ENCODE measurements at regions of chr11 and their contacts with region 1.

Region 1: DNA sequence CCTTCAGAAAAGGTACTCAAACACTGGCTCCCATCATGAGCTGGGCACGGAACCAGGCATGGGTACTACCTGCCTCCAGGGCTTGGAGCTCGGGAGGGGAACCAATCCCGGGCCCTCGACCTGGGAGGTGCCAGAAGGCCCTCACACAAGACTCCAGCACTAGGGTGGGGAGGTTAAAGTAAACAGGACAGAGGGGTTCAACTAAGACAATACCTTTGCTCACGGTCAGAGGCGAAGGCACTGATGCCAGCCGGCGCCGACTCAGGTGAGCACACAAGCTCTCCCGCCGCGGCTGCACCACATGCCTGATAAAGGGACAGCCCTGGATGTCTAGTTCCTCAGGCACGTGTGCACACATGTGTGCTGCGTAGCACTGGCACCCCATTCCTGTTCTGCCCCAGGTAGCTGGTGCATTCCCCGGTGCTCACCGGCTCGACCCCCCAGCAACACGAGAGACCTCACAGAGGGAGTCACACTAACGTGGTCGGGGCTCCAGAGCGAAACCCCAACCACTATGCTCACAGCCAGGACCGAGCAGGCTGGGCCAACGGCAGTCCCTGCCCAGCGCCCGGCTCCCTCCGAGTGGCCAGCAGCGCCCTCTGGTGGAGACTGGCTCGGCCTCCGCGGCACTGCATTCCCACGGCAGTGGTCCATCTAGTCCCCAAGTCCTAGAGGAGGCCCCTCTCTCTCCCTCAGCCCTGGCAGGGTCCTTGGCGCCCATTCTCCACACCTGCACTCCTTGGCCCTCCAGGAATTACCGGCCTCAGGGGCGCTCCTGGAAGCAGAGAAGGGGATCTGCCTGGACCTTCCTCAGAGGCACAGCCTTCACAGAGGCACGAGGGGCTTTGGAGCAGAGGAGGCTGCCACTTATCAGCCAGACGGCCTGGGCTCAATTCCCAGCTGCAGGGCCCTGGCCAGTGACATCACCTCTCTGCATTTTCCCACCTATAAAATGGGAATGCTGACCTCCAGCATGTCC is 28.8 kb upstream of the MOB2 start:
- DNase-seq: peak; percentile 85 to 96
- ATAC-seq: peak; percentile 94
- H3K4me3 ChIP-seq: no peak overlapping the region
- H3K27ac ChIP-seq: no peak overlapping the region
- H3K4me1 ChIP-seq: no peaks in the 10 kb centered on the region
- H3K27me3 ChIP-seq: no peaks in the 10 kb centered on the region

Region 2: GRCh38 chr11:1202776-1203504 is 312.4 kb before region 1 on chr11:
- intact Hi-C with region 1: loop called (anchors 1 to 2 kb)
- DNase-seq: peak; percentile 55 to 88
- ATAC-seq: peak; percentile 73
- H3K4me3 ChIP-seq: no peak overlapping the region
- H3K27ac ChIP-seq: no peak overlapping the region
- H3K4me1 ChIP-seq: no peaks in the 10 kb centered on the region
- H3K27me3 ChIP-seq: no peaks in the 10 kb centered on the region

Region 3: GRCh38 chr11:1251236-1251770 is 264.1 kb before region 1 on chr11:
- intact Hi-C with region 1: no loop called
- DNase-seq: no peak
- ATAC-seq: no peak
- H3K4me3 ChIP-seq: no peak overlapping the region
- H3K27ac ChIP-seq: no peak overlapping the region
- H3K4me1 ChIP-seq: no peaks in the 10 kb centered on the region
- H3K27me3 ChIP-seq: no peaks in the 10 kb centered on the region

Region 4: DNA sequence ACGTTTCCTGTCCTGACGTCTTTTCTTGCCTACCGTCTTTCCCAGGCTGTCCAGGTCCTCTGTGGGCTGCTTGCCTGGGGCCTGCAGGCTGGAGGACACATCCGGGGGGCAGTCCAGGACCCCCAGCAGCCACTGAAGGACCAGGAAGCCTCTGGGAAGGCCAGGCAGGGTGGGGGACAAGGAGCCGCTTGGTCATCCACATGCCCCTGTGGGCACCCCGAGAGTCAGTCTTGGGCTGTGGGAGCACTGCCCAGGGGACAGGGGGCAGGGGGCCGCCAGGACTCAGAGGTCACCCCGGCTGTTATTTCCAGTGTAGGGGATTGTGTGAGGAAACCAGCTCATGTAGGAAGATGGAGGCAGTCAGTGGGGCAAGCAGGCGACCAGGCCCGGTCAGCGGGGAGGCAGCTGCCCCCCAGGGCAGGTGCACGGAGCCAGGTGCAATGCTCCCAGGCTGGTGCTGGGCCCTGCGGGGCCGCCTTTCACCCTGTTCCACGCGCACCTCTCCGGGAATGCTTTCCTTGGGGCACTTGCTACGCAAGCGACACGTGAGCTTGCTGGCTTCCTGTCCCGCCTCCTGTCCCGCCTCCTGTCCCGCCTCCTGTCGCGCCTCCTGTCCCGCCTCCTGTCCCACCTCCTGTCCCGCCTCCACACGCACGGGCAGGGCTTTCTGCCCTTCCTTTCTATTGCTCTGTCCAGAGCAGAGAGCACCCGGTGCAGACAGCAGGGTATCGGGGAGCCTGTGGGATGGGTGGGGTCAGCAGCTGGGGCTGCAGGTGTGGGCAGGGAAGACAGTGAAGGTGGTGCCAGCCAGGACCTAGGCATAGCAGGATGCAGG is 253.0 kb before region 1 on chr11:
- intact Hi-C with region 1: loop called (anchors 5 kb)
- DNase-seq: peak; percentile 94 to 97
- ATAC-seq: peak; percentile 93
- H3K4me3 ChIP-seq: no peak overlapping the region
- H3K27ac ChIP-seq: no peak overlapping the region
- H3K4me1 ChIP-seq: no peaks in the 10 kb centered on the region
- H3K27me3 ChIP-seq: no peaks in the 10 kb centered on the region

Region 5: GRCh38 chr11:1335811-1336761 is 179.3 kb before region 1 on chr11:
- intact Hi-C with region 1: loop called (anchors 5 to 10 kb)
- DNase-seq: peak; percentile 81 to 88
- ATAC-seq: peak; percentile 76
- H3K4me3 ChIP-seq: peak overlapping the region; percentile 7 to 41
- H3K27ac ChIP-seq: peak overlapping the region in 1 of 2 donors; percentile 18
- H3K4me1 ChIP-seq: no peaks in the 10 kb centered on the region
- H3K27me3 ChIP-seq: no peaks in the 10 kb centered on the region

Region 6: DNA sequence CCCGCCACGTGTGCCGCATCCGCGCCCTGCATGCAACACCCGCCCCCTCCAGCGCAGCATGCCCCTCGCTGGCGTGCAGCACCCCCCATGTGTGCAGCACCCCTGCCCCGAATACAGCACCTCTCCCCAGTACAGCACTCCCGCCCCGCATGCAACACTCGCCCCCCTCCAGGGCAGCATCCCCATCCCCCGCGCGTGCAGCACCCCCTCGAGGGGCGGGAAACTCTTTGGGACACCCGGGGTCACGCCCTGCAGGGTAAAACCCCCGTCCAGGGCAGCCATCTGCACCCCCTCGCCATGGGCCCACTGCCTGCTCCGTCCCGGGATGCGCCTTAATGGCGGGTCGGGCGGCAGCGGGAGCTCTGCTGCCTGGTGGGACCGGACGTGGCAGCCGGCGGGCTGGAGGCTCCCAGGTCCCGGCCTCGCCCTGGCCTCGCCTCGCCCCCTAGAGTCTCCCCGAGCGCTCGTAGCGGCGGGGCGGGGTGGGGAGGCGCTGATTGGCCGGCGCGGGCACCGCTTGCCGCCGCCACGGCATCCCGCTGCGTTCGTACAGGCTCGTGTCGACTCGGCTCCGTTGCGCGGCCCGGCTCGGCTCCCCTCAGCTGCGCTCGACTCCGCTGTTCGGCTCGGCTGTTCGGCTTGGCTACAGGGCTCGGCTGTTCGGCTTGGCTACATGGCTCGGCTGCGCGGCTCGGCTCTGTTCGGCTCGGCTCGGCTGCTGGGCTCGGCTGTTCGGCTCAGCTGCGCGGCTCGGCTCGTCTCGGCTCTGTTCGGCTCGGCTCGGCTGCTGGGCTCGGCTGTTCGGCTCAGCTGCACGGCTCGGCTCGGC is 126.1 kb before region 1 on chr11:
- intact Hi-C with region 1: loop called in 1 of 2 experiments (anchors 10 kb)
- DNase-seq: peak; percentile 98 to 99
- ATAC-seq: peak; percentile 99
- H3K4me3 ChIP-seq: peak overlapping the region; percentile 22 to 28
- H3K27ac ChIP-seq: no peak overlapping the region
- H3K4me1 ChIP-seq: no peaks in the 10 kb centered on the region
- H3K27me3 ChIP-seq: no peaks in the 10 kb centered on the region

Region 7: DNA sequence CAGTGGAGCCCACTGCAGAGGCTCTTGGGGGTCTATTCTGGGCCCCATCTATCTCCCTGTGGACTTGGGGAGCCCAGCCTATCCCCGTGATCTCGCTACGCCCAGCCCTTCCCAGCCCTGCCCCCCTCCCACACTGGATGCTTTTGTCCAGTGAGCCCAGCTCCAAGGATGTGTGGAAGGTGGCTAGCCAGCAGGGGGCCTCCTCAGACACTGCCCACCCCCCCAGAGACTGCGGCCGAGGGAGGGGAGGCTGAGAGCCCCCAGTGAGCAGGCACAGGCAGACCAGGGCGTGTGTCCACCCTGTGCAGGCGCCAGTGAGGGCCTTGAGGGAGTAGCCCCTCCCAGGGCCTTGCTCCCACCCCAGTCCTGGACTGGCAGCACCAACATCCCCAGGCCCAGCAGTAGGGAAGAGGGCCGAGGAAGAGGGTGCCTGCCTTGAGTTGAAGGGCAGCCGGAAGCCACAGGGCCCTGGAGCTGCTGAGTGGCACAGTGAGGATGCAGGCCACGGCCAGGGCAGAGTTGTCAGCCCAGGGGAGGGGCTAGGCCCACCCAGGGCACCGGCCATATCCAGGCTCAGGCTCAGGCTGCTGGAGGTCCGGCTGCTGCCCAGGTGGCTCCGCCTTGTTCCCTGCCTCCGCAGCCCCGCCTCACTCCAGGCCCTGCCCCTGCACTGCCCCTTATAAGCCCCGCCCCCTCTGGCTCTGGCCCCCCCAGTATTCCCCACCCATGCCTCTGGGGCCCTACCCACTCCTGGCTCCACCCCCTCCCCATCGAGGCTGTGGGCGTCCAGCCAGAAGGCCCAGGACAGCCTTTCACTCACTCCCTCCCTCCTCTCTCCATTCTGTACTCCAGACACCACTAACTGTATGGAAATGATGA is 56.8 kb before region 1 on chr11:
- intact Hi-C with region 1: loop called (anchors 5 kb)
- DNase-seq: peak; percentile 72 to 90
- ATAC-seq: peak; percentile 68
- H3K4me3 ChIP-seq: no peak overlapping the region
- H3K27ac ChIP-seq: no peak overlapping the region
- H3K4me1 ChIP-seq: no peaks in the 10 kb centered on the region
- H3K27me3 ChIP-seq: no peaks in the 10 kb centered on the region

Measured in aorta (tissue), 5 donors.